H1 (cell line): ENCODE measurements at regions of chr15 and their contacts with region 1.

Region 1: GRCh38 chr15:42650208-42651066 is 75.0 kb downstream of the STARD9 start:
- DNase-seq: peak; percentile 13 to 71
- H3K4me3 ChIP-seq: no peak overlapping the region
- H3K27ac ChIP-seq: no peak overlapping the region
- H3K4me1 ChIP-seq: no peaks in the 10 kb centered on the region
- H3K27me3 ChIP-seq: no peaks in the 10 kb centered on the region
- CTCF ChIP-seq: peak; percentile 46 to 83 (median 66)
- EP300 ChIP-seq: no peak
- POLR2A ChIP-seq: no peak
- RAD21 ChIP-seq: peak; percentile 94 to 95

Region 2: DNA sequence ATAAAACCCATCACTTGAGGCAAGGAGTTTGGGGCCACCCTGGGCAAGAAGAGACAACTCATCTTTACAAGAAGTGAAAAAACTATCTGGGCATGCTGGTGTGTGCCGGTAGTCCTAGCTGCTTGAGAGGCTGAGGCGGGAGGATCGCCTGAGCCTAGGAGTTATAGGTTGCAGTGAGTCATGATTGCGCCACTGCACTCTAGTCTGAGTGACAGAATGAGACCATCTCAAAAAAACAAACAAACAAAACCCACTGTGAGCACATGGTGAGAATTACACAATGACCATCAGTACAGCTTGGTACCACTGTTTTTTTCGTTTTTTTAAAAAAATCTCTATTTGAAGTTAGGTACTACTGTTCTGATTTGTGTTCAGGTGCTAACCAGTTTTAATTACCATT is 455.9 kb before region 1 on chr15:
- CTCF ChIA-PET with region 1: no interaction called
- POLR2A ChIA-PET with region 1: no interaction called
- DNase-seq: no peak
- H3K4me3 ChIP-seq: no peak overlapping the region
- H3K27ac ChIP-seq: no peak overlapping the region
- H3K4me1 ChIP-seq: no peaks in the 10 kb centered on the region
- H3K27me3 ChIP-seq: no peaks in the 10 kb centered on the region
- CTCF ChIP-seq: no peak
- EP300 ChIP-seq: no peak
- POLR2A ChIP-seq: no peak
- RAD21 ChIP-seq: no peak

Region 3: GRCh38 chr15:42504631-42505030 is 145.8 kb before region 1 on chr15:
- CTCF ChIA-PET with region 1: interaction called, 10 read pairs
- POLR2A ChIA-PET with region 1: no interaction called
- DNase-seq: no peak
- H3K4me3 ChIP-seq: no peak overlapping the region
- H3K27ac ChIP-seq: no peak overlapping the region
- H3K4me1 ChIP-seq: no peaks in the 10 kb centered on the region; a peak in 2 of 7 replicates
- H3K27me3 ChIP-seq: no peaks in the 10 kb centered on the region
- CTCF ChIP-seq: no peak
- EP300 ChIP-seq: no peak
- POLR2A ChIP-seq: no peak
- RAD21 ChIP-seq: no peak